ENCODE measurements at regions of chr7 and their contacts with region 1.

Region 1: GRCh38 chr7:44490351-44491200 is at the start of gene NUDCD3:
- DNase-seq: peak; percentile 80
- ATAC-seq: peak; percentile 84
- H3K4me3 Mint-ChIP-seq: peak within 1 kb of the TSS; percentile 90
- H3K27ac Mint-ChIP-seq: peak within 1 kb of the TSS; percentile 97
- H3K4me1 Mint-ChIP-seq: peaks cover 46% of the 10 kb centered on the region
- H3K27me3 Mint-ChIP-seq: peaks cover 5% of the 10 kb centered on the region
- CTCF ChIP-seq: no peak
- total RNA-seq, gene NUDCD3: 80.7 and 85.1 TPM in 2 replicates

Region 2: DNA sequence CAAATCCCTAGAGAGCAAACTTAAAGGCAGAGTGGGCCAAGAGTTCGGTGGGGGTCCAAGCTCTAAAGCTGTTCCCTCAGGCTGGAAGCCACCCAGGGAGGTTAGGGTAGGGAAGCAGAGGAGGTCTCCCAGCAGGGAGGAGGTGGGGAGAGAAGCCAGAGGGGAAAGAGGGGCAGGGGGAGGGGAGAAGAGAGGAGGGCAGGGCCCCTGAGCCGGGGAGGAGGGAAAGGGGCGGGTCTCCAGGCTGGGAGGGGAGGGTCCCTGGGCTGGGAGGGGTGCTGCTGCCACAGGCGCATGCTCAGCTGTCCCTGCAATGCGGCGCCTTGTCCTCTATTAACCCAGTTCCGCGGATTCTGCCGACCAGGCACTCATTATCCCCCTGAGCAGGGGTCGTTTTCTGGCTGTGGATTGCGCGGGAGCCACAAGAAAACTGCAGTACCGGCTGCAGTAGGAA is 214.6 kb before region 1 on chr7:
- CTCF ChIA-PET with region 1: no interaction called
- POLR2A ChIA-PET with region 1: no interaction called
- intact Hi-C with region 1: no loop called
- DNase-seq: no peak
- ATAC-seq: no peak
- H3K4me3 Mint-ChIP-seq: no peak overlapping the region
- H3K27ac Mint-ChIP-seq: no peak overlapping the region
- H3K4me1 Mint-ChIP-seq: no peaks in the 10 kb centered on the region
- H3K27me3 Mint-ChIP-seq: peaks cover 6% of the 10 kb centered on the region
- CTCF ChIP-seq: no peak

Region 3: GRCh38 chr7:44573464-44574286 is 83.1 kb after region 1 on chr7 and contains the start of gene DDX56:
- CTCF ChIA-PET with region 1: no interaction called
- POLR2A ChIA-PET with region 1: interaction called, 21 read pairs
- intact Hi-C with region 1: loop called (anchors 2 kb)
- DNase-seq: peak; percentile 82
- ATAC-seq: peak; percentile 97
- H3K4me3 Mint-ChIP-seq: peak within 1 kb of the TSS; percentile 94
- H3K27ac Mint-ChIP-seq: peak within 1 kb of the TSS; percentile 94
- H3K4me1 Mint-ChIP-seq: peaks cover 35% of the 10 kb centered on the region
- H3K27me3 Mint-ChIP-seq: no peaks in the 10 kb centered on the region
- CTCF ChIP-seq: no peak
- total RNA-seq, gene DDX56: 92.6 and 99.7 TPM in 2 replicates

Measured in activated B cell treated with CpG ODN at 0.5 μM for 24 hours (primary cell).